ENCODE measurements at regions of chr13 and their contacts with region 1.

Region 1: GRCh38 chr13:40644838-40645604 is 21.4 kb downstream of the FOXO1 start:
- DNase-seq: peak; percentile 74
- H3K4me3 ChIP-seq: no peak overlapping the region
- H3K27ac ChIP-seq: peak overlapping the region; percentile 25
- H3K4me1 ChIP-seq: peaks cover 16% of the 10 kb centered on the region
- H3K27me3 ChIP-seq: no peaks in the 10 kb centered on the region
- CTCF ChIP-seq: no peak

Region 2: DNA sequence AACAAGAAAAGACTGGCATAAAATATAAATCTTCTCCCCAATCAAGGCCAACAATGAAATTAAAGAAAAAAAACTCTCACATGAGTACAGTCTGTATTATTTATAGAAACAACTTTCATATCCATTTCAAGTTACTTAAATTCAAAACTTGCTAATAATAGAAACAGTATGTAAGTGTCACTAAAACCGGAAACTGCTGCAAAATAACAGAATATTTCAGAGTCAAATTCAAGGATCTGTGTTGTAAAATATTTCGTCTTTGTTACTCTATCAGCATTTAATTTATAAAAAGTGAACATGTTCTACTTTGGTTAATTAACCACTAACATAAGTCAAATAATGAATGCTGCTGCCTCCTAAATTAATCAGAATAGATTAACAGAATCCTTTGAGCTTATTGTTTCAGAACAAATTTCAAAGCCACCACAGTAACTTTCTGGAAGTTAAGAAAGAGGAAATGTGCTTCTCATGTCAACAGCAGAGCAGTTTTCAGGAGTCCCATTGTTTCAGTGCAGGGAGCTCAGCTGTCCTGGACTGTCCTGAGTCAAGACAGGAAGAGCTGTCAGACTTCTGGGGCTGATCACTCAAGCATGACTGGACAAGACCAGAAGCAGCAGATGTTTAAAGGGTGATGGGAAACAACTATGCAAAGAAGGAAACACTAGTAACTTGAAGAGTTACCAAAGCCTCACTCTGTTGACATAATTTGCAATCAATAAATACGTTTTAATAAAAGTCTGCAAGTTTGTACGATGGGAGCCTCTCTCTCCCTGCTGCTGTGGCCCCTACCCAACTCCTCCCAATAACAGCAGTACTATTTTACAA is 55.5 kb before region 1 on chr13:
- CTCF ChIA-PET with region 1: no interaction called
- dilution Hi-C with region 1: loop called (anchors 10 kb)
- in situ Hi-C with region 1: no loop called
- intact Hi-C with region 1: loop called (anchors 5 kb)
- DNase-seq: peak; percentile 89
- H3K4me3 ChIP-seq: no peak overlapping the region
- H3K27ac ChIP-seq: no peak overlapping the region
- H3K4me1 ChIP-seq: peaks cover 37% of the 10 kb centered on the region
- H3K27me3 ChIP-seq: no peaks in the 10 kb centered on the region
- CTCF ChIP-seq: no peak

Region 3: DNA sequence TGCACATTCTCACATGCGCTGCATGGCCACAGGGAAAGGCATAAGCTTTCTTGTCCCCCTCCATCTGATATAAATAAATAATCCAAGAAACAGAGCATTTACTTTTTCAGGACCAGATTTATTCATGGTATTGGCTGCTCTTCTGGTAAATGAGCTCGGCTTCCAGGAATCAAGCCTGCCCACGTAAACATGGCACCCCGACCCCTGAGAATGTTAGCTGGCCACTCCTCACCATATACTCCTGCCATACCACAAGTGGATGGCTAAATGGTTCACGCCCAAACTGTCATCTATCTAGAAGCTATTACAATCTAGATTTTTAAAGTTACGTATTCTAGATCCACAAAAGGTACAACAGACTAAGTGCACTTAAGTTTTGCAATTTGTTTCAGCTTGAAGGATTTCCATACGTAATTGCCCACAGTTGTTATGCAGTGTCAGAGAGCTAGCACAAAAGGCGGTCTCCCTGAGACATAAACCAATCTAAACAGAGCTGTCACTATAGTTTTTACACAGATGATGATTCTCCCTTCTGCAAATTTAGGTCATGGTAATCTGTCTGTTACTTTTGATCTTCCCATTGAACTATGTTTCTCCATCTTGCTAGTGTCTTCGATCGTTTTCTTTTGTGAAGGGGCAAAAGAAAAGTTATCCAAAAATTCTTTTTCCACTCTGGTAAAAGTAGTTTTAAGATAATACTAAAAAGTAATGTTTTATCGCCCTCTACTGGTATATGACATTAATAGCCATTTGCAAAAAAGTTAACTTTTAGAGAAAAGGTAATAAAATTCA is 37.6 kb after region 1 on chr13:
- CTCF ChIA-PET with region 1: no interaction called
- dilution Hi-C with region 1: no loop called
- in situ Hi-C with region 1: no loop called
- intact Hi-C with region 1: no loop called
- DNase-seq: no peak
- H3K4me3 ChIP-seq: no peak overlapping the region
- H3K27ac ChIP-seq: no peak overlapping the region
- H3K4me1 ChIP-seq: no peaks in the 10 kb centered on the region
- H3K27me3 ChIP-seq: no peaks in the 10 kb centered on the region
- CTCF ChIP-seq: peak; percentile 45 to 47

Measured in mammary epithelial cell (primary cell).